Caco-2 (cell line): ENCODE measurements at regions of chr16 and their contacts with region 1.

Region 1: DNA sequence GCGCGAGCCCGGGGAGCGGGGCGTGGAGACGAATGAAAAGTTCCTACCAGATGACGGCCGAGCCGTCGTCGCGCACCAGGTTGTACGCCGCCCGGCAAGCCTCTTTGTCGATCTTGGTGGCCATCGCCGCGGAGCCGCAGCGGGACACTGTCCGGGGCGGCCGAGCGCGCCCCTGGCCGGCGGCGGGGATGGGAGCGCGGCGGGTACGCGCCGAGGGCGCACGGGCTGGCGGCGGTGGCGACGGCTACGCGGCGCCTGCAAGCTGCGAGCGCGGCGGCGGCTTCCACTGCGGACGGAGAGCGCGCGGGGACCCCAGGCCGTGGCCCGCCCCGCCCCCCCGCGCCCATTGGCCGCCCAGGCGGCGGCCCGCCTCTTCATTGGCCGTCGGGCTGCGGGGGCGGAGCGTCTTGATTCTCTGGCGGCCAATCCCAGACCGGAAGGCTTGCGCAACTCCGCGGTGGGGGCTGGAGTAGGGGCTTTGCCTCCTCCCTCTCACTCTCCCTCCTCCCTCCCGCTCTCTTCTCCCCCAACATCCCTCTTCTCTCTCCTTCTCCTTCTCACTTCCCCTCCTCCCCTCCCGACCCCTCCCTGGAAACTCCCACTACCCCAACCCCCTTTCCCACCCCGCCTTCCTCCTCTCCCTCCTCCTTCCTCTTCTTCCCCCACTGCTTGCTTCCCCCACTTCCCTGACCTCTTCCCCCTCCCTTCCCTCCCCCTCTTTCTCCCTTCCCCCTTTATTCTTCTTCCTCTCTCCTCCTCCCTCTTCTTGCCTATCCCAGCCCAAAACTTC is at the start of gene COTL1:
- DNase-seq: peak; percentile 99
- H3K4me3 ChIP-seq: peak within 1 kb of the TSS; percentile 96
- H3K4me3 Mint-ChIP-seq: peak within 1 kb of the TSS; percentile 96
- H3K27ac Mint-ChIP-seq: peak within 1 kb of the TSS; percentile 100
- H3K4me1 ChIP-seq: peaks cover 31% of the 10 kb centered on the region
- H3K4me1 Mint-ChIP-seq: peaks cover 59% of the 10 kb centered on the region
- H3K27me3 ChIP-seq: no peaks in the 10 kb centered on the region
- H3K27me3 Mint-ChIP-seq: no peaks in the 10 kb centered on the region
- CTCF ChIP-seq: no peak
- total RNA-seq, gene COTL1: 434 and 461 TPM in 2 replicates

Region 2: GRCh38 chr16:84511180-84511824 is 106.7 kb before region 1 on chr16:
- CTCF ChIA-PET with region 1: interaction called, 22 read pairs
- POLR2A ChIA-PET with region 1: interaction called, 8 read pairs
- intact Hi-C with region 1: loop called (anchors 1 kb)
- DNase-seq: peak; percentile 78 to 88
- H3K4me3 ChIP-seq: no peak overlapping the region
- H3K4me3 Mint-ChIP-seq: peak overlapping the region; percentile 21
- H3K27ac Mint-ChIP-seq: peak overlapping the region; percentile 56
- H3K4me1 ChIP-seq: peaks cover 36% of the 10 kb centered on the region
- H3K4me1 Mint-ChIP-seq: peaks cover 43% of the 10 kb centered on the region
- H3K27me3 ChIP-seq: no peaks in the 10 kb centered on the region
- H3K27me3 Mint-ChIP-seq: no peaks in the 10 kb centered on the region
- CTCF ChIP-seq: peak; percentile 91 to 95

Region 3: DNA sequence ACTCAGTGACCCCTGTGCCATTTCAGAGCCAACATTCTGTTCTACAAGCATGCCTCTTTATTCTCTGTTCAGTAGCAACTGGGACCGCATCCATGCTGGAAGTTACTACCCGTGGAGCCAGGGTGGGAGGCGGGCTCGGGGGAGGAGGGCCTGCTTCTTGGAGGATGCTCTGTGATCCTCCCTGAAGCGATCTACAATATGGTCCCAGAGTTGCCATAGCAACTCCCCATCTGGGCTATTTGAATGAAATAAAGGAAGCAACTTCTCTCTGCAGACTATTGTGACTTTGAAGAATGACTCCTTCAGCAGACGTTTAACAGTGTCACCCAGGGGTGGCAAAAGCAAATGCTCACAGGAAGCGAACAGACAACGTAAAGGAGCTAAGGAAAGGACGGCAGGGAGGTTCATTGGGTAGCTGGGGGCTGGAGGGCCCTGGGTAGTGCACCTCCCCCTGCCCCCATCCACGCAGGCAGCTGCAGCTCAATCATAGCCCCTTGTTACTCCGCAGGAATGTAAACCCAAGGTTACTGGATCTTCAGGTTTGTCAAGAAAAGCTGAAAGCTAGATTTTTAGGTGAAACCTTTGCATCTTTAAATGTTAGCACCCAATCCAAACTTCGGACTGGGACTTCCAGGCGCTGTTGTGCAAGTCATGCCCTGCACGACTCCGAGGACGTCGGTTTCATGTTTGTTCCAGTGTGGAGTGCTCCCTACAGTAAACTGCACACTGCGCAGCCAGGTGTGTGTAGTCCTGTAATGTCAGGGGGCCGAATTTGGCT is 62.4 kb before region 1 on chr16:
- CTCF ChIA-PET with region 1: no interaction called
- POLR2A ChIA-PET with region 1: no interaction called
- intact Hi-C with region 1: loop called (anchors 1 kb)
- DNase-seq: peak; percentile 64 to 78
- H3K4me3 ChIP-seq: no peak overlapping the region
- H3K4me3 Mint-ChIP-seq: peak overlapping the region; percentile 36
- H3K27ac Mint-ChIP-seq: peak overlapping the region; percentile 77
- H3K4me1 ChIP-seq: peaks cover 57% of the 10 kb centered on the region
- H3K4me1 Mint-ChIP-seq: peaks cover 56% of the 10 kb centered on the region
- H3K27me3 ChIP-seq: no peaks in the 10 kb centered on the region
- H3K27me3 Mint-ChIP-seq: no peaks in the 10 kb centered on the region
- CTCF ChIP-seq: no peak

Region 4: DNA sequence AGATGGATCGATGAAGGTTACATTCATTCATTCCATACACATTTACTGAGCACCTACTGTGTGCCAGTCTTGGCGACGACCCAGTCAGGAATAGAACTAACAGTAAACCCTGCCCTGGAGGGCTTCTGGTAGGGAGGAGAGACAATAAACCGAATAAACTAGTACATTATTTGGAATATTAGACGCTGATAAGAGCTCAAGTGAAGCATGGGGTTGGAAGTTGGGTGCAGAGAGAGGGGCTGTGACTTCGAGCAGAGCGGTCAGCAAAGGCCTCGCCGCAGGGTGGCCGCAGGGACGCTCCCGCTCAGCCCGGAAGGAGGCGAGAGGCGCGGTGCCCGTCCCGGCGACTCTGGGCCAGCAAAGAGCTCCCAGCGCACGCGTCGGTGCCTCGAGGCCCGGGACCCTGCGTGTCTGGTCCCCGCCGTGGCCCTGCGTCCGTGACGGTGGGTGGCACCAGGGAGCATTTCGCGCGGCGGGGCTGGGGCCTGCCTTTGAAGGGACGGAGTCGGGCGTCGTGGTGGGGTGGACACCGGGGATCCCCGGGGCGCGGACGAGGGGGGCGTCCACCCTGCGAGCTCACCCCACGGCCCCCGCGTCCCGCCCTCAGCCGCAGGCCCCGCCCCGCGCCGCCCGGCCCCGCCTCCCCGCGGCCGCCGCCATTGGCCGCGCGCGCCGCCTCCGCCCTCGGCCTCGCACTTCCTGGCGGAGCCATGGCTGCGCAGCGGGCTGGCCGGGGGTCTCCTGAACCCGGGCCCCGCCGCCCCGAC is 30.0 kb after region 1 on chr16 and contains the start of gene KLHL36:
- CTCF ChIA-PET with region 1: interaction called, 10 read pairs
- POLR2A ChIA-PET with region 1: interaction called, 4 read pairs
- intact Hi-C with region 1: no loop called
- DNase-seq: peak; percentile 55 to 78
- H3K4me3 ChIP-seq: peak within 1 kb of the TSS; percentile 95
- H3K4me3 Mint-ChIP-seq: peak within 1 kb of the TSS; percentile 87
- H3K27ac Mint-ChIP-seq: peak within 1 kb of the TSS; percentile 88
- H3K4me1 ChIP-seq: peaks cover 14% of the 10 kb centered on the region; the same call in 1 of the 2 replicates
- H3K4me1 Mint-ChIP-seq: peaks cover 12% of the 10 kb centered on the region
- H3K27me3 ChIP-seq: no peaks in the 10 kb centered on the region
- H3K27me3 Mint-ChIP-seq: peaks cover 6% of the 10 kb centered on the region
- CTCF ChIP-seq: no peak
- total RNA-seq, gene KLHL36: 67.6 and 70.2 TPM in 2 replicates

Region 5: DNA sequence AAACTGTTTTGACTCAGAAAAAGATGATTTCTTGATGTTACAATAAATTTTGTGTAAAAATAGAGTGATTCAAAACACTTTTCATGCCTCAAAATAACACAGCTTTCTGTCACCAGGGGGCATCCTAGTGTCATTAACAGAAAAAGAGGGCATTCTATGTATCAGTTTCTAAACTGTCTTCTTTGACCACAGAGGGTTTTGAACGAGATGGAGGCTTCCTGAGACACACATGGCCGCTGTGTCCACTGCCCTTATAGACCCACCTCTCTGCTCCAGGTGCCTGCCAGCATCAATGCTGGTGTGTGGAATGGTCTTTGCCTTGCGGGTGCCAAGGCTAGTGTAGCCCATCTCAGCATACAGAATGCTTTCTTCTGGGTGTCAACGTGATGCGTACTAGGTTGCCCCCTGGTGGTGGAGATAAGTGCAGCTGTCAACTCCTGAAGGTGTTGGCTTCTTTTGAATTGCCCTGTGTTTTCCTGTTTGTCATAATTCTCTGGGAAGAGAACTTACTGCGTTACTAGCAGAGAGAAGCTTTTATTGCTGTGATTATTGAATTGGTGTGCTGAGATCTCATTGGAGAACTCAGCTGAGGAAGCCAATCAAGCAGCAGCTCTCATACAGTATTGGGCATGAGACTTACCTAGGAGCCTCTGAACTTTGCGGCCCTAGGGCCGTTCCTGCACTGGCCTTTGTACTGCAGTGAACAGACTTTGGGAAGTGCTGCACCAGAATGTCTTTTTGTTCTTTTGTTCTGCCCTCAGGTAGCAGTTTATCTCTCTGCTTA is 120.5 kb after region 1 on chr16:
- CTCF ChIA-PET with region 1: interaction called, 14 read pairs
- POLR2A ChIA-PET with region 1: no interaction called
- intact Hi-C with region 1: loop called (anchors 1 kb)
- DNase-seq: peak; percentile 82 to 86
- H3K4me3 ChIP-seq: no peak overlapping the region
- H3K4me3 Mint-ChIP-seq: no peak overlapping the region
- H3K27ac Mint-ChIP-seq: no peak overlapping the region
- H3K4me1 ChIP-seq: peaks cover 7% of the 10 kb centered on the region; the same call in 1 of the 2 replicates
- H3K4me1 Mint-ChIP-seq: peaks cover 25% of the 10 kb centered on the region
- H3K27me3 ChIP-seq: no peaks in the 10 kb centered on the region
- H3K27me3 Mint-ChIP-seq: no peaks in the 10 kb centered on the region
- CTCF ChIP-seq: peak; percentile 91 to 92

Region 6: DNA sequence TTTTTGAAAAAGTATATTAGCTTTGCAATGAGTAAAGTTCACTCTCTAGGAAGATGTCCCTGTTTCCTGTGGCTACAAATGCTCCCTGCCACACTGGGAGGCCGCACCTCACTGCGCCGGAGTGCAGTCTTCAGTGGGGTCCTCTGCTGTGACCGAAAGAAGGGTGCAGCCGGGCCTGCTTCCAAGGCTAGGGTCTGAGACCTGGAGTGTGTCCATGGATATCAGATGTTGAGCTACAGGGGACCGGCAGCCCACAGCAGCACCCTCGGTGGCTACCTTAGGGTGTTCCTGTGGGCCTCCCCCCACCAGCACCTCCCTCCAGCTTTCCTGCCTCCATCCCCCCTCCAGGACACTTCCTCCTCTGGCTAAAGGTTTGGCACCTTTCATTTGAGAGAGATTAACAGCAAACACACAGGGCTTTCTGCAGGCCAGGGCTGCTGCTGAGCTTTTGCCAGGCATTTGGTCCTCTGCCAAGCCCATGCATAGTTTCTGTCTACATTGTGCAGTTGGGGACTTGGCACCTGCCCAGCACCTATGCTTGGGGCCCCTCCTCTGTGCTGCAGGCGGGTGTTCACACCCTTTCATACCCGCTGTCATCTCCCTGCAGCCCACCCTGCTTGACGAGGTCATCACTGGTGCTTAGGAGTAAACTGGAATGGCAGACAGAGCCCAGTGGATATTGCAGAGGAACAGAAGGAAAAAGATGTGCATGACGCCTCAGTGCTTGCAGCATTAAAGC is 168.0 kb after region 1 on chr16:
- CTCF ChIA-PET with region 1: no interaction called
- POLR2A ChIA-PET with region 1: no interaction called
- intact Hi-C with region 1: no loop called
- DNase-seq: no peak
- H3K4me3 ChIP-seq: no peak overlapping the region
- H3K4me3 Mint-ChIP-seq: no peak overlapping the region
- H3K27ac Mint-ChIP-seq: no peak overlapping the region
- H3K4me1 ChIP-seq: no peaks in the 10 kb centered on the region
- H3K4me1 Mint-ChIP-seq: no peaks in the 10 kb centered on the region
- H3K27me3 ChIP-seq: no peaks in the 10 kb centered on the region
- H3K27me3 Mint-ChIP-seq: no peaks in the 10 kb centered on the region
- CTCF ChIP-seq: no peak